Ascending aorta (tissue), 2 donors: ENCODE measurements at regions of chr17 and their contacts with region 1.

Region 1: GRCh38 chr17:35731239-35731931 is at the start of gene RASL10B:
- DNase-seq: peak in 1 of 2 donors; percentile 86
- H3K4me3 ChIP-seq: peak within 1 kb of the TSS; percentile 76 to 81
- H3K27ac ChIP-seq: no peak within 1 kb of the TSS
- H3K4me1 ChIP-seq: peaks cover 0 to 14% of the 10 kb centered on the region in 2 donors
- H3K27me3 ChIP-seq: no peaks in the 10 kb centered on the region
- CTCF ChIP-seq: no peak
- total RNA-seq, gene RASL10B: 9.9 TPM

Region 2: GRCh38 chr17:35684055-35684802 is 47.2 kb before region 1 on chr17:
- intact Hi-C with region 1: loop called (anchors 5 kb)
- DNase-seq: no peak
- H3K4me3 ChIP-seq: no peak overlapping the region
- H3K27ac ChIP-seq: peak overlapping the region in 1 of 2 donors; percentile 0
- H3K4me1 ChIP-seq: no peaks in the 10 kb centered on the region
- H3K27me3 ChIP-seq: no peaks in the 10 kb centered on the region
- CTCF ChIP-seq: no peak

Region 3: GRCh38 chr17:35700150-35700549 is 31.2 kb before region 1 on chr17:
- intact Hi-C with region 1: loop called (anchors 5 kb)
- DNase-seq: peak; percentile 17 to 75
- H3K4me3 ChIP-seq: no peak overlapping the region
- H3K27ac ChIP-seq: peak overlapping the region in 1 of 2 donors; percentile 7
- H3K4me1 ChIP-seq: peaks cover 0 to 12% of the 10 kb centered on the region in 2 donors
- H3K27me3 ChIP-seq: no peaks in the 10 kb centered on the region
- CTCF ChIP-seq: no peak